CD8-positive, alpha-beta T cell (primary cell): ENCODE measurements at regions of chr1 and their contacts with region 1.

Region 1: GRCh38 chr1:46487818-46488218 is 1.8 kb upstream of the DMBX1 start:
- DNase-seq: no peak
- ATAC-seq: no peak
- H3K4me3 ChIP-seq: no peak overlapping the region
- H3K4me3 Mint-ChIP-seq: no peak overlapping the region
- H3K27ac ChIP-seq: no peak overlapping the region
- H3K27ac Mint-ChIP-seq: no peak overlapping the region
- H3K4me1 ChIP-seq: peaks cover 9% of the 10 kb centered on the region
- H3K4me1 Mint-ChIP-seq: peaks cover 19% of the 10 kb centered on the region
- H3K27me3 ChIP-seq: peaks cover 14 to 18% of the 10 kb centered on the region in 2 experiments
- H3K27me3 Mint-ChIP-seq: peaks cover 74% of the 10 kb centered on the region
- CTCF ChIP-seq: no peak

Region 2: GRCh38 chr1:46477153-46477929 is 10.5 kb before region 1 on chr1:
- CTCF ChIA-PET with region 1: interaction called, 13 read pairs
- POLR2A ChIA-PET with region 1: no interaction called
- intact Hi-C with region 1: no loop called
- DNase-seq: peak; percentile 52 to 79 (median 73)
- ATAC-seq: peak; percentile 97
- H3K4me3 ChIP-seq: no peak overlapping the region
- H3K4me3 Mint-ChIP-seq: no peak overlapping the region
- H3K27ac ChIP-seq: no peak overlapping the region
- H3K27ac Mint-ChIP-seq: no peak overlapping the region
- H3K4me1 ChIP-seq: no peaks in the 10 kb centered on the region
- H3K4me1 Mint-ChIP-seq: no peaks in the 10 kb centered on the region
- H3K27me3 ChIP-seq: peaks cover 0 to 6% of the 10 kb centered on the region in 2 experiments
- H3K27me3 Mint-ChIP-seq: peaks cover 28% of the 10 kb centered on the region
- CTCF ChIP-seq: peak; percentile 84